ENCODE measurements at regions of chr3 and their contacts with region 1.

Region 1: DNA sequence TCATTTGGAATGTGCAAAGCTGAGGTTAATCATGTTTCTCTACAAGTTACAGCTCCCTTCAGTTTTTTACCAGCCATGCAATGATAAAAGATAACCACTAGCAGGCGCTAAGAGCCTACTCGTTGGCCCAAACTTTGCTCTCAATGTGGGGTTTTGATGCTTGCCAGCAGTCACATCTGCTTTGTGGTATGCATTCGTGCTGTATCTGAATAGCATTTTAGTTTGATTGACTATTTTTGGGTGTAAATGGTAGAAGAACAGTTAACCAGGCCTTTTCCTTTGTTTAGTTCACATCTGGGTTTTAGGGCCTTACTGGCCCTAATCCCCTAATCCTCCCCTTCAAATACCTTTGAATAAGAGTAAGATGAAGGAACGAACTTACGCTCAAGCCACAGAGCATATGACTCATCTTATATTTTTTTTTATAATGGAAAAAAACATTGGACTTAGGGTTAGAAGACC is 4.4 kb upstream of the CLDN11 start:
- DNase-seq: peak; percentile 72
- H3K4me3 ChIP-seq: no peak overlapping the region
- CTCF ChIP-seq: peak; percentile 83

Region 2: DNA sequence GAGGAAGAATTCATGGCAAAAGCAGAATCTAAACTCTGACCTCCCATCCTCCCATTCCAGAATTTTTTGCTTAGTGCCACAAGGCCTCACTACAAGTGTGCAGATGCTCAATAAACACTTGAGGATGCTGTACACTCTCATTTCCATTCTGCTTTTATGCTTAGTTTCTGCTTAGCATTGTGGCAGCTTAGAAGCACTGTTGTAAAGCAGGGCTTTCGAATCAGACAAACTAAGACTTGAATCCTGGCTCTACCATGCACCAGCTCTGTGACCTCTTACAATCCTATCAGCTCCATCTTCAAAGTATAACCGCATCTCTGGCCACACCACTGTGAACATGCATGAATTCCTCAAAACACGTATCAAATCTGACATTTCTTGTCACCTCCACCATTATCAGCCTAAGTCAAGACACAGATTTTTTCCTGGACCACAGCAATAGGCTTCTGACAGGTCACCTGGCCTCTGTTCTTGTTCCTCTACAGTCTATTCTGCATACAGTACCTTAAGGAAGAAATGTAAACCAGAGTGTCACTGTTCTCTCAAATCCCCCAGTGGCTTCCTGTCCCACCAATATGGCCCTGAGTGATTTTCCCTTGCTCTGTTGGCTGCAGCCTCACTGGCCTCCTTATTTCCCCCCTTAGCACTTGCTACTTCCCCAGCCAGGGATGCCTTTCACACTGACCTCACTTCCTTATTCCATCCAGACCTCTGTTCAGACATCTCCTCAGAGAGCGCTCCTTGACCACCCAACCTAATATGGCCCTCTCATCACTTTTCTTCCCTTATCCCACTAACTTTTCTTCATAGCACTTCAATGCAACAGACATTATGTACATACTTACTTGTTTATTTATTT is 224.6 kb before region 1 on chr3:
- CTCF ChIA-PET with region 1: interaction called, 13 read pairs
- POLR2A ChIA-PET with region 1: no interaction called
- DNase-seq: no peak
- H3K4me3 ChIP-seq: no peak overlapping the region
- CTCF ChIP-seq: no peak

Region 3: DNA sequence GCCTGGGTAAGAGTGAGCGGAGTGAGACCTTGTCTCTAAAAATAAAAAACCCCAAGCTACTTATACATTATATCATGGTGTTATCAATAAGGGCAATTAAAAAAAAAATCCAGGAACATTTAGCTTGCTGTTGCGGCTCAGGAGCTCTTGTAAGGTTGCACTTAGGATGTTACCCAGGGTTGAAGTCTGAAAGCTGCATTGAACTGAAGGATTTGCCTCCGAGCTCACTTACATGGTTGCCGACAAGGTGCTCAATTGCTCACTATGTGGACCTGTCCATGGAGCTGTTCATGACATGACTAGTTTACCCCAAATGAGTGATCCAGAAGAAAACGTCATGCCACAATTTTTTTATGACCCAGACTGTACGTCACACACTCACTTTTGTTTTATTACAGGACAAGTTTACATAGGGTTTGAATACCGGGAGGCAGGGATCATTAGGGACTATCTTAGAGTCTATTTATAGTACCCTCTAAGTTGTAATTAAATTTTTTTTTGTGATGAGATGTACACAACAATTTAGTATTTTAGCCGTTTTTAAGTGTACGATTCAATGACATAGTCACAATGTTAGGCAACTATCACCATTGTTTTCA is 16.6 kb before region 1 on chr3:
- CTCF ChIA-PET with region 1: interaction called, 47 read pairs
- POLR2A ChIA-PET with region 1: interaction called, 3 read pairs
- DNase-seq: no peak
- H3K4me3 ChIP-seq: no peak overlapping the region
- CTCF ChIP-seq: no peak

Region 4: GRCh38 chr3:170499565-170500156 is 85.4 kb after region 1 on chr3:
- CTCF ChIA-PET with region 1: interaction called, 10 read pairs
- POLR2A ChIA-PET with region 1: no interaction called
- DNase-seq: no peak
- H3K4me3 ChIP-seq: no peak overlapping the region
- CTCF ChIP-seq: peak; percentile 64

Region 5: GRCh38 chr3:170598091-170598502 is 183.9 kb after region 1 on chr3:
- CTCF ChIA-PET with region 1: no interaction called
- POLR2A ChIA-PET with region 1: no interaction called
- DNase-seq: no peak
- H3K4me3 ChIP-seq: no peak overlapping the region
- CTCF ChIP-seq: no peak

Region 6: GRCh38 chr3:170848292-170848917 is 434.2 kb after region 1 on chr3:
- CTCF ChIA-PET with region 1: interaction called, 108 read pairs
- POLR2A ChIA-PET with region 1: no interaction called
- DNase-seq: no peak
- H3K4me3 ChIP-seq: no peak overlapping the region
- CTCF ChIP-seq: peak; percentile 14